T-cell (primary cell): ENCODE measurements at regions of chr1 and their contacts with region 1.

Region 1: DNA sequence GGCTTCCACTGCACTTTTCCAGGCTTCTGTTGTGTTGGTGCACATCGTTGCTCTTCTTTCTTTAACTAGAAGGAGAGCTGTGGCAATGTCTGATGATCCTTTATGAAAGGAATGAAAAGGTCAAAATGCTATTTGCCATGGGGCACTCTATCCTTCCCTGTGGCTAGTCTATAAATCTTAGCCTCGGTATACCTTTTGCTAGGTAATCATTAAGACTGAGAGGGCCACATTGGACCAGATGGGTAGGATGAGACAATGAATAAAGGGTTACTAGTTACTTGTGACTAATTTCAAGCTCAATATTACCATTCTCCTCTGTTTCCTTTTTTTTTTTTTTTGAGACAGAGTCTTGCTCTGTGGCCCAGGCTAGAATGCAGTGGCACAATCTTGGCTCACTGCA is 89.4 kb upstream of the C1orf87 start:
- DNase-seq: no peak
- ATAC-seq: no peak
- H3K4me3 ChIP-seq: no peak overlapping the region
- H3K4me3 Mint-ChIP-seq: no peak overlapping the region
- H3K27ac ChIP-seq: no peak overlapping the region
- H3K27ac Mint-ChIP-seq: no peak overlapping the region
- H3K4me1 ChIP-seq: no peaks in the 10 kb centered on the region
- H3K4me1 Mint-ChIP-seq: no peaks in the 10 kb centered on the region
- H3K27me3 ChIP-seq: peaks cover 0 to 2% of the 10 kb centered on the region in 2 experiments
- H3K27me3 Mint-ChIP-seq: no peaks in the 10 kb centered on the region

Region 2: GRCh38 chr1:60152886-60153285 is 10.1 kb before region 1 on chr1:
- CTCF ChIA-PET with region 1: interaction called in 1 of 2 experiments, 10 read pairs
- POLR2A ChIA-PET with region 1: no interaction called
- DNase-seq: no peak
- ATAC-seq: no peak
- H3K4me3 ChIP-seq: no peak overlapping the region
- H3K4me3 Mint-ChIP-seq: no peak overlapping the region
- H3K27ac ChIP-seq: no peak overlapping the region
- H3K27ac Mint-ChIP-seq: no peak overlapping the region
- H3K4me1 ChIP-seq: no peaks in the 10 kb centered on the region
- H3K4me1 Mint-ChIP-seq: no peaks in the 10 kb centered on the region
- H3K27me3 ChIP-seq: peaks cover 0 to 2% of the 10 kb centered on the region in 2 experiments
- H3K27me3 Mint-ChIP-seq: peaks cover 0 to 8% of the 10 kb centered on the region in 2 donors